CD4-positive, alpha-beta T cell (primary cell): ENCODE measurements at regions of chr9 and their contacts with region 1.

Region 1: DNA sequence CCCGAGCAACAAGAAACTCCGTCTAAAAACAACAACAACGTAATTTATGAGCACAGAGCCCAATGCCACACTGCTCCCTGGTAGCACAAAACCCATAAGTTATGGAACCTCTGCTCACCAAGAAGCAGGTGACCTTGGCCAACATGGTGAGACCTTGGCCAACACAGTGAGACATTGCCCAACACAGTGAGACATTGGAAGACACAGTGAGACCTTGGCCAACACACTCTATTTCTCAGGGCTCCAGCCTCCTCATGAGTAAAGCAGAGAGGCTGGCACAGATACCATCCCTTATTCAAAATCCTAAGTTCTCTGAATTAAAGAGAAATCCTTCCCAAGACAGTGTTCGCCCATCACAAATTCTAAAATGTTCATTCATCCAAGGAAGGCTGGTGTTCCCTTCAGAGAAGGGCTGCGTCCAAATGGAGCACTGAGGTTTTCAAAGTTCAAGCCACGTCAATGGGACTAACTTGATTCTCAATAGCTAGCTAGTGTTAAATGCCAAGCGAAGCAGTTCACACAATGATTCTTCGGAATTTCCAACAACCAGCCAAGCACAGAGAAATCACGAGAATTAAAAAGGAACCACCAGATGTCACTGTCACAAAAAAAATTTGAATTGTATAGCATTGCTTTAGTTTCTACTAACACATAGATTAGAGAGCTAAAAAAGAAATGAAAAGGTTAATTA is 29.5 kb downstream of the TTC39B start:
- DNase-seq: peak in 3 of 14 experiments; percentile 29 to 59 (median 56)
- ATAC-seq: no peak
- H3K4me3 ChIP-seq: no peak overlapping the region
- H3K4me3 Mint-ChIP-seq: no peak overlapping the region
- H3K27ac ChIP-seq: no peak overlapping the region
- H3K27ac Mint-ChIP-seq: peak overlapping the region; percentile 52
- H3K4me1 ChIP-seq: peaks cover 19% of the 10 kb centered on the region
- H3K4me1 Mint-ChIP-seq: peaks cover 77% of the 10 kb centered on the region
- H3K27me3 ChIP-seq: no peaks in the 10 kb centered on the region
- H3K27me3 Mint-ChIP-seq: no peaks in the 10 kb centered on the region
- CTCF ChIP-seq: peak; percentile 68

Region 2: GRCh38 chr9:15317836-15318235 is 40.3 kb after region 1 on chr9:
- CTCF ChIA-PET with region 1: interaction called, 3 read pairs
- POLR2A ChIA-PET with region 1: no interaction called
- intact Hi-C with region 1: loop called in 1 of 2 experiments (anchors 2 kb)
- DNase-seq: no peak
- ATAC-seq: no peak
- H3K4me3 ChIP-seq: no peak overlapping the region
- H3K4me3 Mint-ChIP-seq: no peak overlapping the region
- H3K27ac ChIP-seq: no peak overlapping the region
- H3K27ac Mint-ChIP-seq: no peak overlapping the region
- H3K4me1 ChIP-seq: no peaks in the 10 kb centered on the region
- H3K4me1 Mint-ChIP-seq: no peaks in the 10 kb centered on the region
- H3K27me3 ChIP-seq: no peaks in the 10 kb centered on the region
- H3K27me3 Mint-ChIP-seq: no peaks in the 10 kb centered on the region
- CTCF ChIP-seq: no peak

Region 3: GRCh38 chr9:15416880-15417279 is 139.3 kb after region 1 on chr9:
- CTCF ChIA-PET with region 1: no interaction called
- POLR2A ChIA-PET with region 1: no interaction called
- intact Hi-C with region 1: loop called (anchors 1 kb)
- DNase-seq: peak in 13 of 14 experiments; percentile 5 to 64 (median 23)
- ATAC-seq: peak; percentile 55
- H3K4me3 ChIP-seq: no peak overlapping the region
- H3K4me3 Mint-ChIP-seq: no peak overlapping the region
- H3K27ac ChIP-seq: no peak overlapping the region
- H3K27ac Mint-ChIP-seq: no peak overlapping the region
- H3K4me1 ChIP-seq: peaks cover 1% of the 10 kb centered on the region
- H3K4me1 Mint-ChIP-seq: peaks cover 3% of the 10 kb centered on the region
- H3K27me3 ChIP-seq: no peaks in the 10 kb centered on the region
- H3K27me3 Mint-ChIP-seq: no peaks in the 10 kb centered on the region
- CTCF ChIP-seq: peak; percentile 34

Region 4: GRCh38 chr9:15492485-15493150 is 215.1 kb after region 1 on chr9:
- CTCF ChIA-PET with region 1: no interaction called
- POLR2A ChIA-PET with region 1: no interaction called
- intact Hi-C with region 1: loop called in 1 of 2 experiments (anchors 5 kb)
- DNase-seq: no peak
- ATAC-seq: no peak
- H3K4me3 ChIP-seq: no peak overlapping the region
- H3K4me3 Mint-ChIP-seq: peak overlapping the region; percentile 17
- H3K27ac ChIP-seq: no peak overlapping the region
- H3K27ac Mint-ChIP-seq: peak overlapping the region; percentile 58
- H3K4me1 ChIP-seq: peaks cover 7% of the 10 kb centered on the region
- H3K4me1 Mint-ChIP-seq: peaks cover 65% of the 10 kb centered on the region
- H3K27me3 ChIP-seq: no peaks in the 10 kb centered on the region
- H3K27me3 Mint-ChIP-seq: no peaks in the 10 kb centered on the region
- CTCF ChIP-seq: no peak